ENCODE measurements at regions of chr3 and their contacts with region 1.

Region 1: GRCh38 chr3:6799264-6799915 is 61.5 kb upstream of the GRM7 start:
- DNase-seq: peak; percentile 26
- ATAC-seq: no peak

Region 2: GRCh38 chr3:5304789-5305683 is 1494.4 kb before region 1 on chr3:
- intact Hi-C with region 1: loop called in 1 of 2 experiments (anchors 10 kb)
- DNase-seq: peak; percentile 34
- ATAC-seq: peak; percentile 57 to 60

Region 3: DNA sequence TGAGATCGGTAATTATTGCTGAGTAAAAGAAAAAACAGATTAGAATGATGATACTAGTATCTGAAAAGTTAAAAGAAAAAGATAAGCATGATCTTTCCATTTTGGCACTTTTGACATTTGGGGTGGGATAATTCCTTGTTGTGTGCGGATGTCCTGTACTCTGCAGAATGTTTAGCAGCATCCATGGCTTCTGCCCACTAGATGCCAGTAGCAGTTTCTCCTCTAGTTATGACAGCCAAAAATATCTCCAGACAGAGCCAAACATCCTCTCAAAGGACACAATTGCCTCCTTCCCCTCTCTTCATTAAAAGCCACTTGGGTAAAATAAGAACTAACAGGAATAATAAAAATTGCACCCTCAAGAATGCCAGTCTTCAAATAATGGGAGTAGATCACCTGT is 407.3 kb before region 1 on chr3:
- intact Hi-C with region 1: loop called (anchors 5 to 10 kb)
- DNase-seq: no peak
- ATAC-seq: no peak

Region 4: DNA sequence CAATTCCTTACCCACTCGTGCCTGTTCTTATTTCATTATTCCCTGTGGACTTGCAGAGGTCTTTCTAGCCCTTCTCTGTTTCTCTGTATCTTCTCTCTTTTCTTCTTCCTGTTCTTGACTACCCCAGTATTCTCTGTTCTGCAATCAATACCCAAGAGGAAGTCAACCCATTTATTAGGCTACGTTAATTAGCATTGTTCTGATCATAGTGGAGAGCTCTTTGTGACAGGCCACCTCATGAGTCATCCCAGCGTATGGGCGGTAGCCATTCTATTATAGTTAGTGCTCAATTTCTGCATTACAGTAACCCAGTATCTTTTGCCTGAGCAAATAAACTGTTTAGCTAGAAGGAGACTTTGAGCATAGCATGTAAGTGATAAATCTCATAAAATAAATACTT is 198.0 kb before region 1 on chr3:
- intact Hi-C with region 1: no loop called
- DNase-seq: no peak
- ATAC-seq: no peak